ENCODE measurements at regions of chr6 and their contacts with region 1.

Region 1: GRCh38 chr6:27146706-27147505 is 100.6 kb upstream of the PRSS16 start:
- DNase-seq: peak; percentile 95
- H3K4me3 Mint-ChIP-seq: no peak overlapping the region
- H3K27ac Mint-ChIP-seq: no peak overlapping the region
- H3K4me1 Mint-ChIP-seq: peaks cover 18% of the 10 kb centered on the region
- H3K27me3 Mint-ChIP-seq: no peaks in the 10 kb centered on the region

Region 2: GRCh38 chr6:26031595-26032339 is 1115.1 kb before region 1 on chr6:
- intact Hi-C with region 1: loop called (anchors 5 kb)
- DNase-seq: peak; percentile 97
- H3K4me3 Mint-ChIP-seq: peak overlapping the region; percentile 92
- H3K27ac Mint-ChIP-seq: peak overlapping the region; percentile 97
- H3K4me1 Mint-ChIP-seq: peaks cover 66% of the 10 kb centered on the region
- H3K27me3 Mint-ChIP-seq: peaks cover 3% of the 10 kb centered on the region

Region 3: GRCh38 chr6:27132532-27133280 is 14.2 kb before region 1 on chr6:
- intact Hi-C with region 1: loop called (anchors 1 kb)
- DNase-seq: peak; percentile 98
- H3K4me3 Mint-ChIP-seq: no peak overlapping the region
- H3K27ac Mint-ChIP-seq: no peak overlapping the region
- H3K4me1 Mint-ChIP-seq: peaks cover 37% of the 10 kb centered on the region
- H3K27me3 Mint-ChIP-seq: no peaks in the 10 kb centered on the region

Region 4: DNA sequence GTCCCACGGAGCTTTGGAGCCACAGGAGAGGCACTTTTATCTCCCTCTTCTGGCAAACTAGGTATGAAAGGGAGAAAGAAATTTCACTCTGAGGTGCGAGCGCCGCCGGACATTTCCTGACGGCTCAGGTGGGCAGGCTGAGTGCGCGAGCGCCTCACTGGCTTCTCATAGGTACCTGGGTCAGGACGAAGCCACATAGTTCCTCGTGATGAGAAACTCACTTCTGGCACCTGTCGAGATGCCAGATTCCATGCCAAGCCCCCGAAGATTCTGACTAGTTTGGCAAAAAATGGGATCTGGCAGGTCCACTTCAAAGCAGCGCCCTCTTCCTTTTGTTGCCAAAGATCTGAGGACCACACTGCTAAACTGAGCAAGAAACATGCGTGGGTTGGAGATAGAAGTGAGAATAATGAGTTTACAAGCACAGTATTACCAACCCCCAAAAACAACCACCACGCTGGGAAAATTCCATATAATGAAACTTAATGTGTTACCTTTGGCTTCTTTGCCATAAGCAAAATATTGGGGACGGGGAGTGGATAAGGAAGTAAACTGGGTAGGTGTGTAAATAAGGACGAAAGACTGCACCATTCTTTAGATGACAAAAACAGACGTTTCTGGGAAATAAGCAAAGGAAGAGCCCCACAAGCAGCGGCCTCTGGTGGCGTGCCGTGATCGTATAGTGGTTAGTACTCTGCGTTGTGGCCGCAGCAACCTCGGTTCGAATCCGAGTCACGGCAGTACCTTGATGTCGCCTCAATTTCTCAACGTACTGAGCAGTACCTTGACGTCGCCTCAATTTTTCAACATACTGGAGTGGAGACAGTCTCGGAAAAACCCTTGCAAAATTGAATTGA is 10.8 kb after region 1 on chr6:
- intact Hi-C with region 1: loop called (anchors 1 kb)
- DNase-seq: peak; percentile 94
- H3K4me3 Mint-ChIP-seq: peak overlapping the region; percentile 90
- H3K27ac Mint-ChIP-seq: peak overlapping the region; percentile 92
- H3K4me1 Mint-ChIP-seq: peaks cover 45% of the 10 kb centered on the region
- H3K27me3 Mint-ChIP-seq: peaks cover 2% of the 10 kb centered on the region

Region 5: GRCh38 chr6:27352850-27353249 is 205.9 kb after region 1 on chr6:
- intact Hi-C with region 1: no loop called
- DNase-seq: no peak
- H3K4me3 Mint-ChIP-seq: no peak overlapping the region
- H3K27ac Mint-ChIP-seq: no peak overlapping the region
- H3K4me1 Mint-ChIP-seq: no peaks in the 10 kb centered on the region
- H3K27me3 Mint-ChIP-seq: no peaks in the 10 kb centered on the region

Region 6: DNA sequence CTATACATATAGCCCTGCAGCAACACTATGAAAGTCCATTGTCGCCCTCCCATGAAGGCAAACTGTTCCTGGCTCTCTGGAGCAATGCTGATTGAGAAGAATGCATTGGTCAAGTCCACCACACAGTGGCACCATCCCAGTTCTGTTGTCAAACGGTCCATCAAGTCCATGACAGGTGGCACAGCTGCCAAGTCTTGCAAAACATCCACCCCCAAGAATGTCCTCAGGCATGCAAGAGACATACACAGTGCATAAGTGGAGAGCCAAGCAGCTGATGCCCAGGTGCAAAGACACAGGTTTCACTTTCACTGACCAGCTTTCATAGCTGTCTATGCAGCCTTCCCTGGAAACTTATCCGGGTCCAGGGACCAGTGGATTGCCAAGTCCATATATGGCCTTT is 259.2 kb after region 1 on chr6:
- intact Hi-C with region 1: no loop called
- DNase-seq: no peak
- H3K4me3 Mint-ChIP-seq: no peak overlapping the region
- H3K27ac Mint-ChIP-seq: no peak overlapping the region
- H3K4me1 Mint-ChIP-seq: no peaks in the 10 kb centered on the region
- H3K27me3 Mint-ChIP-seq: no peaks in the 10 kb centered on the region

Region 7: GRCh38 chr6:27809939-27810767 is 663.2 kb after region 1 on chr6:
- intact Hi-C with region 1: loop called (anchors 2 kb)
- DNase-seq: peak; percentile 96
- H3K4me3 Mint-ChIP-seq: peak overlapping the region; percentile 87
- H3K27ac Mint-ChIP-seq: peak overlapping the region; percentile 96
- H3K4me1 Mint-ChIP-seq: peaks cover 67% of the 10 kb centered on the region
- H3K27me3 Mint-ChIP-seq: no peaks in the 10 kb centered on the region

Region 8: DNA sequence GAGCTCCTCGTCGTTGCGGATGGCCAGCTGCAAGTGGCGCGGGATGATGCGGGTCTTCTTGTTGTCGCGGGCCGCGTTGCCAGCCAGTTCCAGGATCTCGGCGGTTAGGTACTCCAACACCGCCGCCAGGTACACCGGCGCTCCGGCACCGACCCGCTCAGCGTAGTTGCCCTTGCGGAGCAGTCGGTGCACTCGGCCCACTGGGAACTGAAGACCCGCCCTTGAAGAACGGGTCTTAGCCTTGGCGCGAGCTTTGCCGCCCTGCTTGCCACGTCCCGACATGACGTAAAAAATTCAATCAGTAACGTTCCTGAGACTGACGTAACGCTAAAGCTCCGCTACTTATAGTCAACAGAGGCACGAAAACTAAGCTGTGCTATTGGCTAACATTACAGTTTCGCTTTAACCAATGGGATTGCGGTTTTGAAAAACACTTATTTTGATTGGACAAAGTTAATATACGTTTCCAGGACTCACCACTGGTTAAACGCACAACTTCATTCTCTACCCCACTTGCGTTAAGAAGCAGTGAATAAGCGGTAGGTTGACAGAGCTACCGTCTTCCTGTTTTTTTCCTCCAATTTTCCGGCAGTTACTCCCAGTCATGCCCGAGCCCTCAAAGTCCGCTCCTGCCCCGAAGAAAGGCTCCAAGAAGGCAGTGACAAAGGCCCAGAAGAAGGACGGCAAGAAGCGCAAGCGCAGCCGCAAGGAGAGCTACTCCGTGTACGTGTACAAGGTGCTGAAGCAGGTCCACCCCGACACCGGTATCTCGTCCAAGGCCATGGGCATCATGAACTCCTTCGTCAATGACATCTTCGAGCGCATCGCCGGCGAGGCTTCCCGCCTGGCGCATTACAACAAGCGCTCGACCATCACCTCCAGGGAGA is 691.4 kb after region 1 on chr6:
- intact Hi-C with region 1: loop called (anchors 1 kb)
- DNase-seq: peak; percentile 96
- H3K4me3 Mint-ChIP-seq: no peak overlapping the region
- H3K27ac Mint-ChIP-seq: no peak overlapping the region
- H3K4me1 Mint-ChIP-seq: peaks cover 28% of the 10 kb centered on the region
- H3K27me3 Mint-ChIP-seq: no peaks in the 10 kb centered on the region

Region 9: GRCh38 chr6:27864906-27865849 is 718.3 kb after region 1 on chr6:
- intact Hi-C with region 1: loop called (anchors 1 kb)
- DNase-seq: peak; percentile 95
- H3K4me3 Mint-ChIP-seq: peak overlapping the region; percentile 97
- H3K27ac Mint-ChIP-seq: peak overlapping the region; percentile 100
- H3K4me1 Mint-ChIP-seq: peaks cover 58% of the 10 kb centered on the region
- H3K27me3 Mint-ChIP-seq: peaks cover 2% of the 10 kb centered on the region

Measured in activated CD4-positive, alpha-beta T cell treated with anti-CD3 and anti-CD28 coated beads, Interleukin-2, amount 10 ng/mL, durations not matched to agents 24 days and 14 days (primary cell).